H1 (cell line): ENCODE measurements at regions of chr7 and their contacts with region 1.

Region 1: GRCh38 chr7:55255496-55256435 is 109.4 kb upstream of the LANCL2 start:
- DNase-seq: peak; percentile 46 to 87
- H3K4me3 ChIP-seq: peak overlapping the region; percentile 32 to 69 (median 61)
- H3K27ac ChIP-seq: no peak overlapping the region
- H3K4me1 ChIP-seq: peaks cover 0 to 4% (median 2%) of the 10 kb centered on the region in 4 experiments; a peak in 3 of 7 replicates
- H3K27me3 ChIP-seq: peaks cover 11 to 41% (median 27%) of the 10 kb centered on the region in 4 experiments
- CTCF ChIP-seq: peak; percentile 85 to 90 (median 89)
- EP300 ChIP-seq: no peak
- POLR2A ChIP-seq: no peak
- RAD21 ChIP-seq: peak; percentile 86 to 93

Region 2: DNA sequence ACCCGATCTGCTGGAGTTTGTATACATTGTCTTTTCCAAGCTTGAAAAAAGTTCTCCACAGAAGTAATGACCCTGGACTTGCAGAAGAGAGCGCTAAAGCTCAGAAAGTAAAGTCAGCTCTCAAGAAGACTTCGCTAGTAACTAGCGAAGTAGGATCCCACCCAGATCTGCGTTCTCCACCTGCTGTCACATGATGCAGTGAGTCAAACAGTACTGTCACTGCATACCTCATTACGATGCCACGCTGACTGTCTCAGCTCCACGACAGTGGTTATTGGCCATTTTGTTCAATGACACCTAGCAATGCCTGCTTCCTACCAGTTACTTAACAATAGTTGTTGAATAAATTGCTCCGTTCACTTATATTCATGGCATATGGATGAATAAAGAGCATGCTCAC is 467.1 kb before region 1 on chr7:
- CTCF ChIA-PET with region 1: interaction called, 32 read pairs
- POLR2A ChIA-PET with region 1: no interaction called
- DNase-seq: peak in 1 of 2 experiments; percentile 47
- H3K4me3 ChIP-seq: no peak overlapping the region
- H3K27ac ChIP-seq: no peak overlapping the region
- H3K4me1 ChIP-seq: 0 out of 7 replicates have a peak, but pooled peaks cover 0 to 2% (median 0%) of the 10 kb centered on the region in 4 experiments
- H3K27me3 ChIP-seq: no peaks in the 10 kb centered on the region; a peak in 2 of 7 replicates
- CTCF ChIP-seq: peak in 2 of 3 experiments; percentile 69 to 79; a peak in 3 of 4 replicates
- EP300 ChIP-seq: no peak
- POLR2A ChIP-seq: no peak
- RAD21 ChIP-seq: peak; percentile 90 to 91

Region 3: DNA sequence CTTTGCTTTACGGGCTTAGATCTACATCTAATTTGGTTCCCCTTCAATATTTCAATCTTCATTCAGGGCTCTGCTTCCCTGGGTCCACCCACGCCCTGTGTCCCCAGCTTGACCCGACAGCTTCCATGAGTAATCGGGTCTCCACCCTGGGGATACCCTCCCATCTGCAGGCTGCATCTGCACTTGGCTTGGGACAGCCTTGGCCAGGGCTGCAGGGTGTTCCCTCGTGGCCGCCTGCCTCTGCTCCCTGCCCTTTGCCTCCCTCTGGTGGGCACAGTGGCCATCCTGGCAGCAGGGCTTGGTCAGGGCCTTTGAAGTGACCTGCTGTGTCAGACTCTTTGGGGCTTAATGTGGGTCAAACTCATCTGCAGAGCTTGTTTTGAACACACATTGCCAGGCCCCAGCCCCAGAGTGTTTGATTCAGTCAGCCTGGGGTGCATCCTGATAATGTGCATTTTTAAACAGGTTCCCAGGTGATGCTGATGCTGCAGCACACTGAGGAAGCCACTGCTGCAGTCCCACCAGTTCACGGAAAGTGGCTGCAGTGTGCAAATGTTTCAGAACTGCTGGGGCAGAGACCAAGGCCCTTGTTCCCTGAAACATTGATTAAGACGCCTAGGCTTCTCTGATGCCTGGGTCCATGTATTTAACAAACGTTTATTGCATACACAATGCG is 416.1 kb before region 1 on chr7:
- CTCF ChIA-PET with region 1: interaction called, 15 read pairs
- POLR2A ChIA-PET with region 1: no interaction called
- DNase-seq: peak; percentile 39 to 85
- H3K4me3 ChIP-seq: no peak overlapping the region
- H3K27ac ChIP-seq: no peak overlapping the region
- H3K4me1 ChIP-seq: peaks cover 0 to 3% (median 0%) of the 10 kb centered on the region in 4 experiments; a peak in 1 of 7 replicates
- H3K27me3 ChIP-seq: no peaks in the 10 kb centered on the region; a peak in 1 of 7 replicates
- CTCF ChIP-seq: peak; percentile 93 to 94 (median 93)
- EP300 ChIP-seq: no peak
- POLR2A ChIP-seq: no peak
- RAD21 ChIP-seq: peak; percentile 90 to 93

Region 4: GRCh38 chr7:55018361-55019190 is 237.2 kb before region 1 on chr7 and contains the start of gene EGFR:
- CTCF ChIA-PET with region 1: interaction called, 12 read pairs
- POLR2A ChIA-PET with region 1: no interaction called
- DNase-seq: peak in 1 of 2 experiments; percentile 75
- H3K4me3 ChIP-seq: peak within 1 kb of the TSS; percentile 40 to 77 (median 53)
- H3K27ac ChIP-seq: no peak within 1 kb of the TSS
- H3K4me1 ChIP-seq: peaks cover 0 to 8% (median 3%) of the 10 kb centered on the region in 4 experiments; a peak in 4 of 7 replicates
- H3K27me3 ChIP-seq: peaks cover 16 to 56% (median 39%) of the 10 kb centered on the region in 4 experiments
- CTCF ChIP-seq: no peak
- EP300 ChIP-seq: no peak
- POLR2A ChIP-seq: no peak
- RAD21 ChIP-seq: no peak
- total RNA-seq, gene EGFR: 5.8 and 6.0 TPM in 2 replicates

Region 5: DNA sequence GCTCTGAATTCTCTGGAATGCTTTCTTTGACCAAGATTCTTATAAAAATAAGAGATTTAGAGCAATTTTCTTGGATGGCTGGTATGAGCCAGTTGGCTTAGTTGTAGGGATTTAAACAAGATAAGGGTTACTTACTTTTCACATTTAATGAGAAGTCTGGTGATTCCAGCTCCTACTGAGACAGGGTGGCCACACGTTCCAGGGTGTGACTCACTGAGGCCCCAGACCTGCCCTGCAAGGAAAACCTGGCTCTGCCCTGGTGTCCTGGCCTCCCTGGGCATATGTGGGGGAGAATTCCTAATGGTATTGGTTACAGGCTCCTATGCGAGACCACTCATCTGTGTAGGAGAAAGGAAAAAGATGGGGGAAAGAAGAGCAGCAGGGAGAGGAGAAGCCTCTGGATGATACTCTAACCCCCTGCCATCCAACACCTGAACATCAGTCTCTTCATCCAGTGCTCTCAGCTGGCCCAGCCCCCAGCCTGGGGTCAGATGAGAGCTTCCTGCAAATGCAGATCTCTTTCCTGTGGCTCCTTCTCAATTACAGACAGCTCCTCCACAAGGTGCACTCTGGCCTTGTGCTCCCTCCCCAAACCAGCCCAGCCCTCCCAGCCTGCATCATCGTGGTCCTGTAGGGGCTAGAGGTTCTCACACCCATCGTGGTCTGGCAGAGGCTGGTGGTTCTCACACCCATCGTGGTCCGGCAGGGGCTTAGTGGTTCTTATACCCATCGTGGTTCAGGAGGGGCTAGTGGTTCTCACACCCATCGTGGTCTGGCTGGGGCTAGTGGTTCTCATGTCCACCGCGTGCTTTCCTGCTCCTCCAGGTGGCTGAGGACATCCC is 97.0 kb before region 1 on chr7:
- CTCF ChIA-PET with region 1: interaction called, 11 read pairs
- POLR2A ChIA-PET with region 1: no interaction called
- DNase-seq: no peak
- H3K4me3 ChIP-seq: no peak overlapping the region
- H3K27ac ChIP-seq: no peak overlapping the region
- H3K4me1 ChIP-seq: no peaks in the 10 kb centered on the region; a peak in 1 of 7 replicates
- H3K27me3 ChIP-seq: no peaks in the 10 kb centered on the region
- CTCF ChIP-seq: no peak
- EP300 ChIP-seq: no peak
- POLR2A ChIP-seq: no peak
- RAD21 ChIP-seq: no peak